ENCODE measurements at regions of chr13 and their contacts with region 1.

Region 1: DNA sequence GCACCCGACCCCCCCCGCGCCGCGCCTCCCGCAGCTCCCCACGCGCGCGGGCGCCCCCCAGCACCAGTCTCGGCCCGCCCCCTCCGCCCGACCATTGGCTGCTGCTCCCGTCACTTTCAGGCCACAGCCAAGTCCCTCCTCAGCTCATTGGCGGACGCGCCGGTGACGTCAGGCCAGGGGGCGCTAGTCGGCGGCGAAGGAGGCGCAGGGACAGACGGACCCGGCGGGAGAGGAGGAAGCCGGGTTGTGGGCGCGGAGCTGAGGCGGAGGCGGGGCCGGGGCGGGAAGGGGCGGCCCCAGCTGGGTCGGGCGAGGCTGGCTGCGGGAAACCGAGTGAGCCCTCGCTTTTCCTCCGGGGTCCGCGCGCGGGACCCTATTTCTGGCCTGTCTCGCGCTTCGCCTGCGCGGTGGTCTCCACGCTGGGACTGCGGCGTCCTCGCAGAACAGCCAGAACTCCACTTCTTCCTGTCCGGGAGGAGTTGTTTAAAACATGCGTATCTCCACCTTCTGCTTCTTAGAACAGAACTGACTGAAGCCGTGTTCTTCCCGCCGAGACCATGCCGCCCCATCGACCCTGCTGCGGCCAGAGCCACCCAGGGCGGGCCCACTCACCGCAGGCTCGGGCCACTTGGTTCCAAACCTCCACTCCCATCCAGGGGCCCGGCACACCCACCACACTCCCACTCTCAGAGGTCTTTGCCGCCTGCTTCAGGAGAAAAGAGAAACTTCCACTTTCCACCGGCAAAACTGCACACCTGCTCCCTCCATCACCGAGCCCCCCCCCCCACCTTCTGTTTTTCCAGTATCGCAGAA is 459 bp upstream of the TMTC4 start:
- DNase-seq: peak; percentile 99
- H3K4me3 ChIP-seq: peak overlapping the region; percentile 60 to 82 (median 81)
- H3K27ac ChIP-seq: peak overlapping the region; percentile 60
- H3K4me1 ChIP-seq: peaks cover 14% of the 10 kb centered on the region
- H3K27me3 ChIP-seq: peaks cover 0 to 3% of the 10 kb centered on the region in 2 experiments
- CTCF ChIP-seq: peak in 1 of 2 donors; percentile 45
- POLR2A ChIP-seq: no peak

Region 2: DNA sequence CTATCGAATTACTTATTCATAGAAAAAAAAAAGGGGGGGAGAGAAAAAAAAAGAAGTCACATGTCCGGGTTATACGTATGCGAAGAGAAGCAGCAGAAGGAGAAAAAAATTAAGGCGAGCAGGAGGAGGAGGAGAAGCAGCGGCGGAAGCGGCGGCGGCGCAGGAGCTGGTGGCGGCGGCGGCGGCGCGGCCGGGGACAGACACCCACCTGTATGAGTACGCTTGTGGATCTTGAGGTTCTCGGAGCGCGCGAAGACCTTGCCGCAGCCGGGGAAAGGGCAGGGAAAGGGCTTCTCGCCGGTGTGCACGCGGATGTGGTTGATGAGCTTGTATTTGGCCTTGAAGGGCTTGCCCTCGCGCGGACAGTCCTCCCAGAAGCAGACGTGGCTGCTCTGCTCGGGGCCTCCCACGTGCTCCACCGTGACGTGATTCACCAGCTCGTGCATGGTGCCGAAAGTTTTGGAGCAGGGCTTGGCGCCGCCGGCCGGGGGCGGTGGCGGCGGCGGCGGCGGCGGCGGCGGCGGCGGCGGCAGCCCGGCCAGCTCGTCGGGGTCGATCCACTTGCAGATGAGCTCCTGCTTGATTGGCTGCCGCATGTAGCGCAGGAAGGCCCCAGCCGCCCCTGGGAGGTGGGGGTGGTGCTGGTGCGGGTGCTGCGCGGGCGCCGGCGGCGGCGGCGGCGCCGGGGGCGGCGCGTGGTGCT is 705.0 kb before region 1 on chr13:
- CTCF ChIA-PET with region 1: no interaction called
- POLR2A ChIA-PET with region 1: no interaction called
- dilution Hi-C with region 1: no loop called
- intact Hi-C with region 1: loop called (anchors 10 kb)
- DNase-seq: no peak
- H3K4me3 ChIP-seq: no peak overlapping the region
- H3K27ac ChIP-seq: no peak overlapping the region
- H3K4me1 ChIP-seq: no peaks in the 10 kb centered on the region
- H3K27me3 ChIP-seq: peaks cover 79 to 94% of the 10 kb centered on the region in 2 experiments
- CTCF ChIP-seq: no peak
- POLR2A ChIP-seq: no peak

Region 3: DNA sequence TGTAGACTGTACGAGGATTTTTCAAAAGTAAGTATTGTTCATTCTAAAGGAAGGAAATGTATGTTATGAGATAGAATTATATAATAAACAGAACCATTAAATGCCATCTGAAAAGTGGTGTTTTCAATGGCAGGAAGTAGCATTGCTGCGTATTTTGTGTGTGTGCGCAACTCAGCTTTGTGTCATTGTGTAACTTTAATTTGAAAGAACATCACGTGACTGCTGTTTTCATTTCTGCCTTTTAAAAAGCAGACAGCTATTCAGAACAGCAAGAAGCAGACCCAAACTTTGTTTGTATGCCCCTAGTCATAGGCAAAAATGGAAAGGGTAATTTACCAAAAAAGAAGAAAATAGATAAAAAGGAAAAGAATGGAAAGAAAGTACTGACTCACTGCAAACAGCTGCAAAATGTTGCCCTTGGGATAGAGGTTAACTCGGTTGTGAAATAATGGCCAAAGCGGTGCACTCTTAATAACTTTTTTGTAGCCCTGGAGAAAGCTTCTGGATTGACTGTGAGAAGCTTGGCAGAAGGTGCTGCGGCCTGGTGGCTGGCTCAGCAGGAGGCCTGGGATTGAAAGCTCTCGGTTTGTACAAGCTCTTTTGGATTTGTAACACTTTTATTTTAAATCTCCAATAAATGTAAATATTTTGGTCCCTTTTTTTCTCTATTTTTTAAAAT is 183.8 kb before region 1 on chr13:
- CTCF ChIA-PET with region 1: no interaction called
- POLR2A ChIA-PET with region 1: no interaction called
- dilution Hi-C with region 1: no loop called
- intact Hi-C with region 1: no loop called
- DNase-seq: peak; percentile 86
- H3K4me3 ChIP-seq: no peak overlapping the region
- H3K27ac ChIP-seq: peak overlapping the region; percentile 30
- H3K4me1 ChIP-seq: peaks cover 11% of the 10 kb centered on the region
- H3K27me3 ChIP-seq: no peaks in the 10 kb centered on the region
- CTCF ChIP-seq: peak in 1 of 2 donors; percentile 2
- POLR2A ChIP-seq: no peak

Region 4: GRCh38 chr13:100588331-100589177 is 86.5 kb before region 1 on chr13 and contains the start of gene GGACT:
- CTCF ChIA-PET with region 1: no interaction called
- POLR2A ChIA-PET with region 1: interaction called, 3 read pairs
- dilution Hi-C with region 1: no loop called
- intact Hi-C with region 1: loop called (anchors 1 kb)
- DNase-seq: peak; percentile 56
- H3K4me3 ChIP-seq: peak within 1 kb of the TSS; percentile 27 to 67 (median 57)
- H3K27ac ChIP-seq: peak within 1 kb of the TSS; percentile 33
- H3K4me1 ChIP-seq: peaks cover 15% of the 10 kb centered on the region
- H3K27me3 ChIP-seq: no peaks in the 10 kb centered on the region
- CTCF ChIP-seq: peak; percentile 72 to 92
- POLR2A ChIP-seq: no peak
- total RNA-seq, gene GGACT: 5.4 and 6.5 TPM in 2 replicates

Region 5: GRCh38 chr13:100646030-100646673 is 28.9 kb before region 1 on chr13:
- CTCF ChIA-PET with region 1: interaction called, 5 read pairs
- POLR2A ChIA-PET with region 1: no interaction called
- dilution Hi-C with region 1: no loop called
- intact Hi-C with region 1: loop called (anchors 1 kb)
- DNase-seq: peak; percentile 34
- H3K4me3 ChIP-seq: no peak overlapping the region
- H3K27ac ChIP-seq: no peak overlapping the region
- H3K4me1 ChIP-seq: no peaks in the 10 kb centered on the region
- H3K27me3 ChIP-seq: no peaks in the 10 kb centered on the region
- CTCF ChIP-seq: peak; percentile 56 to 57
- POLR2A ChIP-seq: no peak

Region 6: GRCh38 chr13:100875392-100876043 is 200.5 kb after region 1 on chr13:
- CTCF ChIA-PET with region 1: no interaction called
- POLR2A ChIA-PET with region 1: no interaction called
- dilution Hi-C with region 1: no loop called
- intact Hi-C with region 1: loop called (anchors 1 kb)
- DNase-seq: peak; percentile 87
- H3K4me3 ChIP-seq: no peak overlapping the region
- H3K27ac ChIP-seq: peak overlapping the region; percentile 89
- H3K4me1 ChIP-seq: peaks cover 13% of the 10 kb centered on the region
- H3K27me3 ChIP-seq: no peaks in the 10 kb centered on the region
- CTCF ChIP-seq: no peak
- POLR2A ChIP-seq: no peak